Right ventricle myocardium inferior (tissue), 1 donor: ENCODE measurements at regions of chr2 and their contacts with region 1.

Region 1: GRCh38 chr2:133266041-133266925 is 302.0 kb downstream of the NCKAP5 start:
- DNase-seq: peak; percentile 25
- ATAC-seq: peak; percentile 50

Region 2: DNA sequence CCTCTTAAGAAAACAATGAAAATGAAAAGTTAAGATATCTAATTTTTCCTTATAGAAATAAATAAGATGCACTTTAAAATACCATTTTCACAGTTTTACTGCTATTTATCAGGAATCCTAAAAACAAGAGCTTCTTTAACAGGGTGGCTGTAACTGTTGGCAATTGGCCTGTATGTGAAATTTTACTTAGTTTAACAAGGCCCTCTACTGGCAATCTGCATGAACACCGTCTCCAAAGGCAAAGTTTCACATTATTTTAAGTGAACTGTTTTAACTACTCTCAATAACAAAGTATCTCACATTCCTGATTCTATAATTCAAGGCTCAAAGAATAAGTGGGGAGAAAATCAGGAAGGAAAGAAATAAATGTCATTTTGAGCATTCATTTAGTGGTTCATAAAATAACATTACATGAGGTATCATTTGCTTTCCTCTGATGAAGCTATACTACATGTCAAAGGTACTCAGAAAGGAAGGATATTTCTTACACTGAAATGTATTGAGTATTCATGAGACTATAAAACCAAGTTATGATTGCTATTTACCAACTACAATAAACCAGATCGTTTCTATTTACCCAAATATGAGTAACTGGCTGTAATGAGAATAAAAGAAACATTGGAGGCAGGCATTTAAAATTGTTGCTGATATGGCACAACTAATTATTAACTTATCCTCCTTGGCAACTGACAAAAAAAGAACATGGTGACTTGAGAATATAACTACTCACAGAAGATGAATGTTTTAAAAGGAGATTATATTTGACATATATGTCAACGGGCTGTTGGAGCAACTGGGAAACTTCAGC is 295.0 kb after region 1 on chr2:
- intact Hi-C with region 1: loop called (anchors 10 kb)
- DNase-seq: no peak
- ATAC-seq: no peak

Region 3: GRCh38 chr2:133780099-133780839 is 514.0 kb after region 1 on chr2:
- intact Hi-C with region 1: loop called (anchors 10 kb)
- DNase-seq: no peak
- ATAC-seq: peak; percentile 63